ENCODE measurements at regions of chrX and their contacts with region 1.

Region 1: DNA sequence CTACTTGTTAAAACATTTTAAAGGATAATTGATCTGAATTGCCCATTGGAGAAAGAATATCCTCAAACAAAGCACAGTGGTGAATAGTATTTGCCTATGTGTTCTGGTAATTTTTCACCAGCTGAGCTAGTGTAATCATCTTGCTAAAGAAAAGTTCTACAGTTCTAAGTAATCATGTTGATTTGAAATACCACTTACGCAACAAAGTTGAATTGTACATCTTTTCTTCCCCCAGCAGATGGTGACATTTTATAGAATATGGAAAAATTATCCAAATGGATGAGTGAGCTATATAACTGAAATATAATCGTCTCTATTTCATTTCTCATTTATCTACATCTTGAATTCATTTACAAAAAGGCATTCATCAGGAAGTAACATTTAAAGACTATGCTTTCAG is 9.7 kb upstream of the ZNF674 start:
- DNase-seq: peak; percentile 58
- ATAC-seq: peak; percentile 34; the same call in 1 of the 2 replicates
- H3K4me3 ChIP-seq: no peak overlapping the region
- H3K27ac ChIP-seq: no peak overlapping the region
- H3K4me1 ChIP-seq: no peaks in the 10 kb centered on the region
- H3K27me3 ChIP-seq: no peaks in the 10 kb centered on the region
- CTCF ChIP-seq: peak; percentile 57
- POLR2A ChIP-seq: no peak
- RAD21 ChIP-seq: peak; percentile 62

Region 2: GRCh38 chrX:46573331-46573891 is 18.5 kb after region 1 on chrX and contains the start of gene CHST7:
- CTCF ChIA-PET with region 1: no interaction called
- POLR2A ChIA-PET with region 1: no interaction called
- dilution Hi-C with region 1: no loop called
- in situ Hi-C with region 1: no loop called
- intact Hi-C with region 1: no loop called
- DNase-seq: peak; percentile 52
- ATAC-seq: peak; percentile 87
- H3K4me3 ChIP-seq: peak within 1 kb of the TSS; percentile 55
- H3K27ac ChIP-seq: peak within 1 kb of the TSS; percentile 23
- H3K4me1 ChIP-seq: peaks cover 2% of the 10 kb centered on the region; the same call in 1 of the 2 replicates
- H3K27me3 ChIP-seq: no peaks in the 10 kb centered on the region
- CTCF ChIP-seq: peak; percentile 39
- POLR2A ChIP-seq: peak; percentile 44; the same call in 1 of the 2 replicates
- RAD21 ChIP-seq: peak; percentile 41
- total RNA-seq, gene CHST7: 2.9 and 3.3 TPM in 2 replicates

Region 3: DNA sequence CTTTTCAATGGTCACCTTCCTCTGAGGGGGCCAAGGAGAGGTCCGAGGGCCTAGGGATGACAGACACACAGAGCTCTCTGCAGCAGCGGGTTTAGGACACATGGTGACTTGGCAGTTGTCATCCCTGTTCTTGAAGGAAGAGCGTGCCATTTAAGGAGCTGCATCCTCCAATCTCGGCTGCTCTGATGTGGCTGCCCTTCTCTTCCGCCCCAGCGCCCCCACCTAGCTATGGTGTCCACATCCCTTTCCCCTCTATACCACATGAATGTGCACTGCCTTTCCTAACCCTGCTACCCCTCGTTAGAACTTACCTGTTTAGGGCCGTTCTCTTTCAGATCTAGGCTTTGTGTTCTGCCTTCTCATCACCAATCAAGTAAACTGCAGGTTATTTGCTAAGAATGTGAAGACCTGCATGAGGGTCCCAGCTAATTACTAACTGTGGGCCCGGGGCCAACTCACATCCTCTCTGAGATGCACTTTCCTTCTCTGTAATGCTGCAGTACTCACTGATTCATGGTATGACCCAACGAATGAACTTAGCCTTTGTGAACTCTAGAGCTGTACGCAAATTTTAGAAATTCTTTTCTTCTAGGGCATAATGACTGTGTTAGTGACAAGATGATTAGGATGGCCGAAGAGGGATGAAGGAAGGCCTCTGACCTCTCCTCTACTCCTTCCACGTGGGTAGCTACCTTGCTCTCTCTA is 56.9 kb after region 1 on chrX:
- CTCF ChIA-PET with region 1: interaction called, 11 read pairs
- POLR2A ChIA-PET with region 1: no interaction called
- dilution Hi-C with region 1: no loop called
- in situ Hi-C with region 1: no loop called
- intact Hi-C with region 1: no loop called
- DNase-seq: no peak
- ATAC-seq: no peak
- H3K4me3 ChIP-seq: no peak overlapping the region
- H3K27ac ChIP-seq: no peak overlapping the region
- H3K4me1 ChIP-seq: no peaks in the 10 kb centered on the region
- H3K27me3 ChIP-seq: no peaks in the 10 kb centered on the region; the same call in 1 of the 2 replicates
- CTCF ChIP-seq: no peak
- POLR2A ChIP-seq: no peak
- RAD21 ChIP-seq: no peak

Region 4: DNA sequence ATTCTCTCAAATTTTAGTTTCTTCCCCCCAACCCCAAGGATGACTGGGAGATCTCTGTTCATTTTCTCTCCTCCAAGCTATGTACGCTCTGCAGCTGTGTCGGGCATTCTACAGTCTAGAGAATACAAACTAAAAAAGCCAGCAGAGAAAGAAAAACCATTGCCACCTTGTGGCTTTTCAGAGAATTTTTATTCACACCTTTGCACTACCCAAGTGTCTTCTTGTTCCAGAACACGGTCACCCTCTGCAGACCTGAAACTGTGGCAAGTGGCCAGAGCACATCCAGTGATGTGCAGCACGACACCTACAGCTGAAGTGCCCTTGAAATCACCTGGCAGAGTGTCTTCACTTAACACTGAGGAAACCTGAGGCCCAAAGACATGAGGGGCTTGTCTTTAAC is 87.2 kb after region 1 on chrX:
- CTCF ChIA-PET with region 1: no interaction called
- POLR2A ChIA-PET with region 1: no interaction called
- dilution Hi-C with region 1: no loop called
- in situ Hi-C with region 1: loop called (anchors 10 kb)
- intact Hi-C with region 1: loop called (anchors 2 kb)
- DNase-seq: peak; percentile 17
- ATAC-seq: peak; percentile 57
- H3K4me3 ChIP-seq: no peak overlapping the region
- H3K27ac ChIP-seq: no peak overlapping the region
- H3K4me1 ChIP-seq: no peaks in the 10 kb centered on the region
- H3K27me3 ChIP-seq: peaks cover 2% of the 10 kb centered on the region; the same call in 1 of the 2 replicates
- CTCF ChIP-seq: peak; percentile 35
- POLR2A ChIP-seq: no peak
- RAD21 ChIP-seq: peak; percentile 39

Region 5: DNA sequence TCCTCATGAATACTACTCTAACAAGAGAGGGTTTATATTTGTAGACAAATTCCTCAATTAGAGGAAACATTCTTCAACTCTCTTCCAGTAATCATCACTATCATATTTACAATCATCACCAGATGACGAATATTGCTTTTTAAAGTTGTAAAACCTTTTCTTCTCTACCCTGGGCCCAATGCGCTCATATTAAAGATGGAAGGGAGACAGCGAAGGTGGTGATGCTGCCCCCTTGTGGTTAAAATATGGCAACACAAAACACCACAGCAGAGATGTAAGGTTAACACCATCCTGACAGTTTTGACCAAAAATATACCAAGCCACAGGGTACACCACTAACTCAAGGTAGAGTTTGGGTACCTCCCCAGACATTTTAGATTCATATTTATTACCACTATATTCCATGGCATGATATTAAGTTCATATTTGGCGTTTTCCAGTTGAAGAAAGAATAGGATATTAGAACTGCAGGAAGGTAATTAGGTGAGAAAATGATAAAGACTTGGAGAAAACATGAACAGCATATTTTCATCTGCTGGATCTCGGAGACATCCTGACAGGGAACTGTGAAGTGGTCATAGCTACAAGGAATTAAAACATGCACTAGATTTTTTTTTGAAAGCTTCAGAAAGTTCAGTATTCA is 131.2 kb after region 1 on chrX:
- CTCF ChIA-PET with region 1: no interaction called
- POLR2A ChIA-PET with region 1: no interaction called
- dilution Hi-C with region 1: no loop called
- in situ Hi-C with region 1: no loop called
- intact Hi-C with region 1: loop called (anchors 1 kb)
- DNase-seq: peak; percentile 41
- ATAC-seq: peak; percentile 80
- H3K4me3 ChIP-seq: no peak overlapping the region
- H3K27ac ChIP-seq: no peak overlapping the region
- H3K4me1 ChIP-seq: peaks cover 5% of the 10 kb centered on the region; the same call in 1 of the 2 replicates
- H3K27me3 ChIP-seq: peaks cover 4% of the 10 kb centered on the region; the same call in 1 of the 2 replicates
- CTCF ChIP-seq: peak; percentile 61
- POLR2A ChIP-seq: no peak
- RAD21 ChIP-seq: peak; percentile 57

Region 6: DNA sequence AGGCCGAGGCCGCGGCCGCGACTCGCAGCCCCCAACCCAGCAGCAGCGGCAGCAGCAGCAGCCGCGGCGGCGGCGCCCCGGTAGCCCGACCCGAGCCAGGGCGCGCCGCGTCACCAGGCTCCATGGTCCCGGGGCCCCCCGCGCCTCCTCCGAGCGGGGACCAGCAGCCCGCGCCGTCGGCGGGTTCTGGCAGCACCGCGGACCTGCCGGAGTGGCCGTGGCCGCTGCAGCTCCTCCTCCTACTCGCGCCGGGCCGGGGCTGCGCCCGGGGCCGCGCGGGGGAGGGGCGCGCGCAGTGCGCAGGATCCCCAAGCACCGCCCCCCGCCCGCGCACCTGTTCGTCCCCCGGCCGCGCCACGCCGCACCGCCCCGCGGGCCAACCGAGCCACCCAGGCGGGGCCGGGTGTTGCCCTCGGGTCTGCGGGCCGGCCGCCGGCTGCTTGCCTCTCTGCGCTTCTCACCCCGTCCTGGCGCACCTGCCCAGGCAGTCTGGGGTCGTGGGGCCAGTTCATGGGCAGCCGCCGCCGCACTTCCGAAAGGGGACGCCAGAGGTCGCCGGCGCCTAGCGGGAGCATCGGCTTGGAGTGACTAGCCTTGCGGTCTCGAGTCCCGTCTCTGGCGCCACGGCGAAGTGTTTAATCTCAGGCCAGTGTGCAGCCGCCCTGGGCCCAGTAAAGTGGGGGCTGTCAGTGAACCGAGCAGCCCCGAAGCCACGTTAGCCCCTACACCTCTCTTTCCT is 204.1 kb after region 1 on chrX and contains the start of gene SLC9A7:
- CTCF ChIA-PET with region 1: interaction called, 3 read pairs
- POLR2A ChIA-PET with region 1: no interaction called
- dilution Hi-C with region 1: no loop called
- in situ Hi-C with region 1: no loop called
- intact Hi-C with region 1: loop called (anchors 5 kb)
- DNase-seq: peak; percentile 61
- ATAC-seq: peak; percentile 86
- H3K4me3 ChIP-seq: peak within 1 kb of the TSS; percentile 83
- H3K27ac ChIP-seq: peak within 1 kb of the TSS; percentile 33; the same call in 1 of the 2 replicates
- H3K4me1 ChIP-seq: peaks cover 5% of the 10 kb centered on the region
- H3K27me3 ChIP-seq: no peaks in the 10 kb centered on the region
- CTCF ChIP-seq: peak; percentile 77
- POLR2A ChIP-seq: no peak
- RAD21 ChIP-seq: peak; percentile 92
- total RNA-seq, gene SLC9A7: 67.5 and 76.4 TPM in 2 replicates

Region 7: GRCh38 chrX:46796574-46797191 is 241.7 kb after region 1 on chrX:
- CTCF ChIA-PET with region 1: interaction called, 3 read pairs
- POLR2A ChIA-PET with region 1: no interaction called
- dilution Hi-C with region 1: no loop called
- in situ Hi-C with region 1: no loop called
- intact Hi-C with region 1: loop called (anchors 1 kb)
- DNase-seq: peak; percentile 64
- ATAC-seq: peak; percentile 71
- H3K4me3 ChIP-seq: no peak overlapping the region
- H3K27ac ChIP-seq: no peak overlapping the region
- H3K4me1 ChIP-seq: 0 out of 2 replicates have a peak, but pooled peaks cover 2% of the 10 kb centered on the region
- H3K27me3 ChIP-seq: no peaks in the 10 kb centered on the region; the same call in 1 of the 2 replicates
- CTCF ChIP-seq: peak; percentile 76
- POLR2A ChIP-seq: no peak
- RAD21 ChIP-seq: peak; percentile 90

Region 8: DNA sequence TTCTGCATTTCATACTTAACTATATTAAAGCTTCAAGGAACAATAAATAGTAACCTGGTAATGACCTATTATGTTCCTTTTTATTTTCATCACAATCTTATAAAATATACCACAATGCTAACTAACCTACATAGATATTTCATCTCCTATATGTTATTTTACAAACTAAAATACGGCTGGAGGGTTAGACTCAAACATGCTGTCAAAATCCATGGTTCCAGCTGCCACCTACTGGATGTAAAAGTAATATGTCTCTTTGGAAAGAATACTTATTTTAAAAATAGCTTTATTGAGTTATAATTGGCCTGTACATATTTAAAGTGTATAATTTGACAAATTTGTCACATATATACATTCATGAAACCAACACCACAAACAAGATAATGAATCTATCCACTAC is 538.3 kb after region 1 on chrX:
- CTCF ChIA-PET with region 1: no interaction called
- POLR2A ChIA-PET with region 1: no interaction called
- dilution Hi-C with region 1: no loop called
- in situ Hi-C with region 1: no loop called
- intact Hi-C with region 1: loop called (anchors 10 kb)
- DNase-seq: peak; percentile 55
- ATAC-seq: peak; percentile 65
- H3K4me3 ChIP-seq: no peak overlapping the region
- H3K27ac ChIP-seq: no peak overlapping the region
- H3K4me1 ChIP-seq: no peaks in the 10 kb centered on the region
- H3K27me3 ChIP-seq: peaks cover 11% of the 10 kb centered on the region
- CTCF ChIP-seq: peak; percentile 55
- POLR2A ChIP-seq: no peak
- RAD21 ChIP-seq: peak; percentile 61

Region 9: DNA sequence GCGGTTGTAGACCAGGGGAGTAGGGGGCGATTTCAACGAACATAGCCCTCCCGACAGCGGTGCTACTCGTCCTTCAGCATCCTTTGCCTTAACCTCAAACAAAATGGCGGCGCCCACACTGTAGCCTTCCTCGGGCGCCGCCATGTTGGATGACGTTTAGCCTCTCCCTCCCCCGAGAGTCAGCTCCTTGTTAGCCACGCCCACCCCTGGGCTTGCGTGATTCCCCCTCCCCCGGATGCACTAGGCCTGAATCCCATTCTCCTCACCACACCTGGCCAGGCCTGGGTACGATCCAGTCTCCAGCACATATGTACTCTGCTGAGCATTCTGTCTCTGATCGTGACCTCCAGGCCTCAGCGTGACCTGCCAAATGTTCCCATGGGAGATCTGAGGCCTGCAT is 766.4 kb after region 1 on chrX:
- CTCF ChIA-PET with region 1: no interaction called
- POLR2A ChIA-PET with region 1: no interaction called
- dilution Hi-C with region 1: no loop called
- in situ Hi-C with region 1: no loop called
- intact Hi-C with region 1: no loop called
- DNase-seq: peak; percentile 43
- ATAC-seq: peak; percentile 32; the same call in 1 of the 2 replicates
- H3K4me3 ChIP-seq: no peak overlapping the region
- H3K27ac ChIP-seq: no peak overlapping the region
- H3K4me1 ChIP-seq: no peaks in the 10 kb centered on the region
- H3K27me3 ChIP-seq: peaks cover 3% of the 10 kb centered on the region
- CTCF ChIP-seq: no peak
- POLR2A ChIP-seq: no peak
- RAD21 ChIP-seq: no peak